AG04449 (cell line): ENCODE measurements at regions of chr15 and their contacts with region 1.

Region 1: DNA sequence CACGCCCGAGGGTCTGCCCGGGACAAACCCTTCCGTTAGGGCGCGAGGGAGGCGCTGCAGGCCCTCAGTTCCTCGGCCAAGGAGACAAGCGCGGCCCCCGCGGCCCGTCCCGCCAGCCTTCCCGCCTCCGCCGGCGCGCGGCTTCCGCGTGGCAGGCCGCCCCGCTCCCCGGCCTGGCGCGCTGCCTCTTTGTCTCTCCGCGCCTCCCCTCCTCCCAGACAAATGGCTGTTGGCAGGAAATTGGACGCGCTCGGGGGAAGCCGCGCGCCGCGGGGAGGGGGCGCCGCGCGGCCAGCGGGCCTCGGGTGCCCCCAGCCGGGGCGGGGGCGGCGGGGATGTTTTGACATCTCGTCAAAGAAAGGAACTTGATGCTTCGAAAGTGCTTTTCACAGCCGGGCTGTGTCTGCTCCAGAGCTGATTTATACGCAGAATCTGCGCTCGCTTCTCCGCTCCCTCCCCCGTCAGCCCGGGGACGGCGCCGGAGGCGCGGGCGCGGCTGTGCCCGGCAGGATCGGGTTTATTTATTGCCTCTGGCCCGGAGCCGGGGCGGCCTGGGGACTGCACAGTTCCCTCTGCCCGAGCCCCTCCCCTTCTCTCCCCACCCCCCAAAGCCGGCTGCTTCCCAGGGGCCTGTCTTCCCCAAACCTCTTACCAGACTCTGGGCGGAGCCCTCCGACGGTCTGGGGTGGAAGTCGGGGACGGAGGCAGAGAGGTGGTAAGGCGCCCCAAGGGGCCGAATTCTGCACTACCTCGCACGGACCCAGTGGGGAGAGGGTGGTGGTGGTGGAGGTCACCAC is 20.7 kb downstream of the SHF start:
- DNase-seq: peak; percentile 34
- H3K4me3 ChIP-seq: peak overlapping the region; percentile 60
- CTCF ChIP-seq: peak; percentile 77

Region 2: DNA sequence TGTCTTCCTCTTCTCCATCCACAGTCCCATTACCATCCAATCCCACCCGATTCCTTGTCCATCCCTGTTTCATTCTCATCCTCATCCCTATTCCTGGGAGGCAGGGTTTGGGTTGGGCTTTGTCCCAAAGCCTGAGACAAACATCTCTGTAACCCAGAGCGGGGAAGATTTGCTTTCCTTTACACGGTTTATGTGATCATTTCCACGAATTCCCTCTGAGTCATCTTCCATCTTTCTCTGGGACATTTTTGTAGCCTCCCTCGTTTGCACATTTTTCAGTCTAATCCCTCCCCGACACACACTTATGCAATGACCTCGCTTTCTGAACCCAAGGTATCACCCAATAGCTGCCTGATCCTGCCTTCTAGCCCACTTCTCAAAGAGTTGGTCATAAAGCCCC is 75.9 kb before region 1 on chr15:
- CTCF ChIA-PET with region 1: no interaction called
- POLR2A ChIA-PET with region 1: no interaction called
- DNase-seq: peak; percentile 33
- H3K4me3 ChIP-seq: no peak overlapping the region
- CTCF ChIP-seq: no peak

Region 3: GRCh38 chr15:45148076-45149059 is 18.7 kb before region 1 on chr15:
- CTCF ChIA-PET with region 1: interaction called, 26 read pairs
- POLR2A ChIA-PET with region 1: no interaction called
- DNase-seq: no peak
- H3K4me3 ChIP-seq: no peak overlapping the region
- CTCF ChIP-seq: no peak

Region 4: GRCh38 chr15:45179221-45179985 is 12.4 kb after region 1 on chr15:
- CTCF ChIA-PET with region 1: interaction called, 57 read pairs
- POLR2A ChIA-PET with region 1: no interaction called
- DNase-seq: no peak
- H3K4me3 ChIP-seq: no peak overlapping the region
- CTCF ChIP-seq: peak; percentile 41

Region 5: GRCh38 chr15:45187894-45188830 is 21.1 kb after region 1 on chr15 and contains the start of gene SHF:
- CTCF ChIA-PET with region 1: interaction called, 24 read pairs
- POLR2A ChIA-PET with region 1: interaction called, 4 read pairs
- DNase-seq: no peak
- H3K4me3 ChIP-seq: peak within 1 kb of the TSS; percentile 71
- CTCF ChIP-seq: no peak

Region 6: DNA sequence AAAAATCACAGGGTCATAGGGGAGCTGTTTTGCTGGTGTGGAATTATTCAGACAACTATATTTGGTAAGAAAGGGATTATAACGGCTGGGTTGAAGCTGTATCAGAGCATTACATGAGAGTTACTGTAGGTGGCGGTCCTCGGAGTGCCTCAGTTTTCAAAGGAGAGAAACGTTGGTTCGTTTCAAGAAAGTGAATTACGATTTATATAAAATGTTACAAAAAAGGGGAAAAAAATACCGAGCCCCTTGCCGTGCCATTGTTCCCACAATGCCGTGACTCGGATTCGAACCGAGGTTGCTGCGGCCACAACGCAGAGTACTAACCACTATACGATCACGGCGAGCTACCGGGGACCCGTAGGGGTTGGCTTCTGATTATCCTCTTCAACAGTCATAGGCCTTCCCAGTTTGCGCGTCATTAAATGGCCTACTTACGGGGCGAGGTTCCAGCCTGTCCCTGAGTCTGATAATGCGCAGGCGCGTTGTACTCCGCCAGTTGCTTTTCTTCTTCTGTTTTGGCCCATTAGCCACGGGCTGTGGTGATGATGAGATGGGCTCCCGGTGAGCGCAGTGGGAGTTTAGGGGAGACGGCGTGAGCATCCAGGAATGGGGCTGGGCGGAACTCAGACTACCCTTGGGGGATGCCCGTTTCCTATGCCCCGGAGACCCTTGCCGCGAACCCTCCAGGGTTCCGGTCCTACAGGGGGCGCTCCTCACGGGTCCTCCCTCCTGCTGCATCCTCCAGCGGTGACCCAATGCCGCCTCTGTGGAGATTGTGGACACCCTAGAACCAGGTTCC is 31.5 kb after region 1 on chr15:
- CTCF ChIA-PET with region 1: interaction called, 47 read pairs
- POLR2A ChIA-PET with region 1: interaction called, 9 read pairs
- DNase-seq: peak; percentile 87
- H3K4me3 ChIP-seq: peak overlapping the region; percentile 92
- CTCF ChIP-seq: peak; percentile 87

Region 7: DNA sequence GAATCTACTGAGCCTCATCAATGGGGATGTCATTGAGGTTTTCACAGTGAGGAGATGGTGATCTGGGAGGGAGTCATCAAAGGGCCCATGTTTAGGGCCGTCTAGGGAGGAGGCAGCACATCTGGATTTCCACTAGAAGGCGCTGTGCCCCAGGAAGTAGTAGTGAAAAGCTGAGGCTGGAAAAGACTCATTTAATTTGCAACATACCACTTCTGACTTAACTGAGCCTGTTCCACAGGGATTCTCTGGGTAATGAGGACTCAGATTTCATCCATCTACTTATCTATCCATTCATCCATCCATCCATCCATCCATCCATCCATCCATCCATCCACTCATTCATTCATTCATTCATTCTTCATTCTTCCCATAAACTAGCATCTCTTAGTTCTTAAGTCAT is 38.2 kb after region 1 on chr15:
- CTCF ChIA-PET with region 1: interaction called, 47 read pairs
- POLR2A ChIA-PET with region 1: interaction called, 9 read pairs
- DNase-seq: no peak
- H3K4me3 ChIP-seq: no peak overlapping the region
- CTCF ChIP-seq: peak; percentile 82

Region 8: GRCh38 chr15:45402162-45402954 is 235.3 kb after region 1 on chr15:
- CTCF ChIA-PET with region 1: interaction called, 104 read pairs
- POLR2A ChIA-PET with region 1: interaction called, 8 read pairs
- DNase-seq: peak; percentile 93
- H3K4me3 ChIP-seq: peak overlapping the region; percentile 82
- CTCF ChIP-seq: no peak